ENCODE measurements at regions of chr14 and their contacts with region 1.

Region 1: DNA sequence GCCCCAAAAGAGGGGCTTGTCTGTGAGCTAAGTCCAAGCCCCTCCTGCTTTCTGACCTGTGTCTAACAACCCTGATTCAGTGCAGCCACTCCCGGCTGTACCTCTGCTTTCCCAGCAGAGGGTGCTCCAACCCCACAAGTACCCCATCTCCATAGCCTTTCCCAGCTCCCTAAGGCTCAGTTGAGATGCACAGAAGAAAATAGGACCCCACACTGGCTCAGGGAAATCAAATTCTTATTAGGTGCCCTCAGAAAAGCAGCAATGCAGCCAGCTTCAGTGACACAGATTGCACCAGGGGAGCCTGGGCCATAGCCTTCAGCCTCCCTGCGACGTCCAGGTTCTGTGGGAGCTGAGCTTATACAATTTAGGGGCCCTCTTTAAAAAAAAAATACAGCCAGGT is 49.9 kb downstream of the LRRC74A start:
- DNase-seq: peak; percentile 76
- ATAC-seq: peak; percentile 95
- H3K4me3 Mint-ChIP-seq: no peak overlapping the region
- H3K27ac Mint-ChIP-seq: no peak overlapping the region
- H3K4me1 Mint-ChIP-seq: peaks cover 5% of the 10 kb centered on the region
- H3K27me3 Mint-ChIP-seq: peaks cover 4% of the 10 kb centered on the region; the same call in 1 of the 2 replicates
- CTCF ChIP-seq: peak; percentile 86

Region 2: GRCh38 chr14:76486251-76486743 is 389.8 kb before region 1 on chr14:
- CTCF ChIA-PET with region 1: no interaction called
- POLR2A ChIA-PET with region 1: no interaction called
- DNase-seq: no peak
- ATAC-seq: no peak
- H3K4me3 Mint-ChIP-seq: no peak overlapping the region
- H3K27ac Mint-ChIP-seq: no peak overlapping the region
- H3K4me1 Mint-ChIP-seq: peaks cover 16% of the 10 kb centered on the region
- H3K27me3 Mint-ChIP-seq: no peaks in the 10 kb centered on the region
- CTCF ChIP-seq: no peak

Region 3: GRCh38 chr14:76729953-76730505 is 146.0 kb before region 1 on chr14:
- CTCF ChIA-PET with region 1: no interaction called
- POLR2A ChIA-PET with region 1: no interaction called
- DNase-seq: no peak
- ATAC-seq: no peak
- H3K4me3 Mint-ChIP-seq: no peak overlapping the region
- H3K27ac Mint-ChIP-seq: no peak overlapping the region
- H3K4me1 Mint-ChIP-seq: peaks cover 11% of the 10 kb centered on the region
- H3K27me3 Mint-ChIP-seq: no peaks in the 10 kb centered on the region; the same call in 1 of the 2 replicates
- CTCF ChIP-seq: no peak

Region 4: DNA sequence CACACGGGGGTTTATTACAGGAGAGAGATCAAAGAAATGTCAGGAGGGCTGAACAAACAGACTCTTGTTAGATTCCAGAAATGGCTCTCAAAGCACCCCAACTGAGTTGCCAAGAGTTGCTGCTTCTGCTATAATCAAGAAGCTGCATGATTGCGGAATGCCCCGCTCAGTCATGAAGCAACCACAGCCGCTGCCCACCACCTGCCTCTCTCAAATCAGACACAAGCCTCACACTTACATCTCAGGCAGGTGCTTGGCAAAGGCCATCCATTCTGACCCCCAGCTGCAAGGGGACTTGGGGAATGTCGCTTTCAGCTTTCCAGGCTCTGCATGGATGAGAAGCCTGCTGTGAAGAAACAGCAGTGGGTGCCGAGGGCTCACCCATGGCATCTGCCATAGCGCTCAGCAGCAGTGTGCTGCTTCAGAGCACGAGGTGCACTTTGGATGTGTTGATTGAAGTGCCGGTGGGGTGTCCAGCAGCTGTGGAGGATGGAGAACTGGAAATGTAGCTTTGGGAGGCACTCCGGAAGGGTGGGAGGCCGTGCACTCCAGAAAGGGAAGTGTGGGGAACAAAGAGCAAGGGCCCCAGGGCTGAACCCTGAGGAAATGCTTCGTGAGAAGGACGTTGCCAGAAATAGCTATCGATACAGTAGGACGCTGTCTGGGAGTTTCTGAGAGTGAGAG is 12.2 kb before region 1 on chr14:
- CTCF ChIA-PET with region 1: interaction called, 16 read pairs
- POLR2A ChIA-PET with region 1: no interaction called
- DNase-seq: no peak
- ATAC-seq: peak; percentile 16
- H3K4me3 Mint-ChIP-seq: no peak overlapping the region
- H3K27ac Mint-ChIP-seq: no peak overlapping the region
- H3K4me1 Mint-ChIP-seq: peaks cover 41% of the 10 kb centered on the region
- H3K27me3 Mint-ChIP-seq: no peaks in the 10 kb centered on the region; the same call in none of the 2 replicates
- CTCF ChIP-seq: no peak

Region 5: GRCh38 chr14:76904740-76905438 is 28.8 kb after region 1 on chr14:
- CTCF ChIA-PET with region 1: interaction called, 196 read pairs
- POLR2A ChIA-PET with region 1: no interaction called
- DNase-seq: no peak
- ATAC-seq: peak; percentile 44
- H3K4me3 Mint-ChIP-seq: no peak overlapping the region
- H3K27ac Mint-ChIP-seq: 0 out of 2 replicates have a peak overlapping the region, but pooled peaks have one; percentile 20
- H3K4me1 Mint-ChIP-seq: peaks cover 8% of the 10 kb centered on the region
- H3K27me3 Mint-ChIP-seq: no peaks in the 10 kb centered on the region
- CTCF ChIP-seq: no peak

Region 6: GRCh38 chr14:76962303-76962660 is 86.2 kb after region 1 on chr14:
- CTCF ChIA-PET with region 1: interaction called, 11 read pairs
- POLR2A ChIA-PET with region 1: no interaction called
- DNase-seq: no peak
- ATAC-seq: no peak
- H3K4me3 Mint-ChIP-seq: peak overlapping the region; percentile 59
- H3K27ac Mint-ChIP-seq: peak overlapping the region; percentile 100
- H3K4me1 Mint-ChIP-seq: peaks cover 87% of the 10 kb centered on the region
- H3K27me3 Mint-ChIP-seq: no peaks in the 10 kb centered on the region
- CTCF ChIP-seq: no peak

Region 7: DNA sequence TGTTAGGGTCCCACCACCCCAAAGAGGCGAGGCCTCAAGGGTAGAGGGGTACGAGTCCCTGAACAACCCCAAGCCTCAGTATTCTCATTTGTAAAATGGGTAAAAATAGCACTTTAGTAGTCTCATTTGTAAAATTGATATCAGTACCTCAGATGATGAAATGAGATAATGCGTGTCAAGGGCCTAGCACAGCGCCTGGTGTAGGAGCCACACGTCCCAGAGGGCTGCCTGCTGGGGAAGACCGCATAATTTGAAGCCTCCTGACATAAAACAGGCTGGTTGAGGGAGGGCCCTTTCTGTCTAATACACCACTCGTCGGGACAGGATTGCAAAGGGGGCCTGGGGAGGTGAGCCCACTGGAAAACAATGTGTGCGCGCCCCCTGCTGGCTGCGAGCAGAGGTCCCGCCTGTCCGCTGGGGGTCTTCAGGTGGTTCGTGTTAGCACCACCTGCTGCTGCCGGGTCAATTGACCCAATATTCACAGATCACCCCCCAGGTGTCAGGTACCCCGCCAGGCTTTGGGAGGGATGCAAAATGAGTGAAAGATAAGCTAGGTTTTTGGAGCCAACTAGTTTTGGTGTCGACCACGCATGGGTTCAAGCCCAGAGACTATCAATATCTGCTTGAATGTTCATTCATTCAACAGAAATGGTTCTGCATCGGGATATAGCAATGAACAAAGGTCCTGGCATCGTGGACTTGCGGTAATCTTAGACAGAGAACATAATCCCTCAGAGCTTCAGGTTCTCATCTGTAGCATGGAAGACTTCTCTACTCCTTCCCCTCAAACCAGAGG is 177.2 kb after region 1 on chr14:
- CTCF ChIA-PET with region 1: interaction called, 34 read pairs
- POLR2A ChIA-PET with region 1: no interaction called
- DNase-seq: peak; percentile 92
- ATAC-seq: peak; percentile 94
- H3K4me3 Mint-ChIP-seq: no peak overlapping the region
- H3K27ac Mint-ChIP-seq: no peak overlapping the region
- H3K4me1 Mint-ChIP-seq: peaks cover 14% of the 10 kb centered on the region
- H3K27me3 Mint-ChIP-seq: no peaks in the 10 kb centered on the region
- CTCF ChIP-seq: peak; percentile 94

Region 8: GRCh38 chr14:77076113-77076631 is 200.1 kb after region 1 on chr14:
- CTCF ChIA-PET with region 1: interaction called, 249 read pairs
- POLR2A ChIA-PET with region 1: no interaction called
- DNase-seq: no peak
- ATAC-seq: peak; percentile 72
- H3K4me3 Mint-ChIP-seq: peak overlapping the region; percentile 51
- H3K27ac Mint-ChIP-seq: peak overlapping the region; percentile 93
- H3K4me1 Mint-ChIP-seq: peaks cover 31% of the 10 kb centered on the region
- H3K27me3 Mint-ChIP-seq: no peaks in the 10 kb centered on the region
- CTCF ChIP-seq: no peak

Region 9: DNA sequence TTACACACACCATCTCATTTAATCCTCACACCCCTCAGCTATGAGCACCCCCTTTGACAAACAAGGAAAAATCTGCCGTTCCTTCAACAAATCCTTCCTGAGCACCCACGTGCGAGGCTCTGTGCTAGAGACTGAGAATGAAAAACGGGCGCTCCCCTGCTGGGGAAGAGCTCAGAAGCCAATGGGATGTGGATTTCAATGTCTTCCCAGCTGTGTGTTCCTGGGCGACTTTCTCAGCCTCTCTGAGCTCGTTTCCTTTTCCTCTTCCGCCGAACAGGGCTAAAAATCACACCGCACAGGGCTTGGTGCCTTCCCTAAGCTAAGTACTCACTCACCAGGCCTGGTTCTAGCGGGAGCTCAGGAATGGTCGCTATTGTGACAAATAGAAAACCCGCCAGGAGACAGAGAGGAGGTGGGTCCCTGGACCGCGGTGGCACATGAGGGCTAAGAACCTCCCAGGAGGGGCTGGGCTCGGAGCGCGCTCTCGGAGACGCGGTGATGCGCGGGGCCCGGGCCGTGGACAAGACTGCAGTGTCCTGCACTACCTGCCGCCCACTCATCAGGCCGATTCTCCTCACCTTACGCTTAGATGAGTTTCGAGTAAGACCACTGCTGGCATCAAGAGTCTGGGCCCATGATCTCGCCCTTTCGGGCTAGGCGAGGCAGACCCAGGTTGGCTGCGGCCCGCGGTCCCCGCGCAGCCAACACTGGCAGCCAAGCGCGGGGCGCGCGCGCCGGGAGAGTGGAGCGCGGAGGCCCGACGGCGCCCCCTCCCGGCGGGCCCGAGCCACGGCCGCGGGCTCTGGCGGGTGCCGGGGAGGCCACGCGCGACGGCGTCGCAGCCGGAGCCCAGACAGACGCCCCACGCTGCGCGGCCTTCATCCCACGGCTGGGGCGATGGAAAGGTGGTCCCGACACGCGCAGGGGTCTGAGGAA is 248.5 kb after region 1 on chr14:
- CTCF ChIA-PET with region 1: interaction called, 28 read pairs
- POLR2A ChIA-PET with region 1: no interaction called
- DNase-seq: peak; percentile 54
- ATAC-seq: peak; percentile 43
- H3K4me3 Mint-ChIP-seq: peak overlapping the region; percentile 72
- H3K27ac Mint-ChIP-seq: no peak overlapping the region
- H3K4me1 Mint-ChIP-seq: peaks cover 62% of the 10 kb centered on the region
- H3K27me3 Mint-ChIP-seq: peaks cover 7% of the 10 kb centered on the region
- CTCF ChIP-seq: peak; percentile 63; the same call in 1 of the 2 replicates